Heart right ventricle (tissue), 16 donors: ENCODE measurements at regions of chr20 and their contacts with region 1.

Region 1: GRCh38 chr20:8131598-8132483 is at the start of gene PLCB1:
- DNase-seq: peak; percentile 86 to 88
- ATAC-seq: peak; percentile 89 to 97 (median 94)
- H3K4me3 ChIP-seq: peak within 1 kb of the TSS; percentile 60 to 95 (median 80)
- H3K27ac ChIP-seq: peak within 1 kb of the TSS; percentile 72 to 90 (median 86)
- H3K4me1 ChIP-seq: peaks cover 0 to 31% (median 9%) of the 10 kb centered on the region in 9 donors
- H3K27me3 ChIP-seq: peaks cover 0 to 19% (median 0%) of the 10 kb centered on the region in 7 donors
- CTCF ChIP-seq: peak; percentile 77 to 91 (median 87)
- total RNA-seq, gene PLCB1: 3.6 to 12.7 (median 7.5) TPM

Region 2: GRCh38 chr20:8043687-8044282 is 88.1 kb before region 1 on chr20:
- intact Hi-C with region 1: loop called in 6 of 10 experiments (anchors 5 to 10 kb)
- DNase-seq: peak in 1 of 2 donors; percentile 39
- ATAC-seq: peak in 6 of 8 donors; percentile 42 to 75 (median 64)
- H3K4me3 ChIP-seq: no peak overlapping the region
- H3K27ac ChIP-seq: no peak overlapping the region
- H3K4me1 ChIP-seq: peaks cover 0 to 6% (median 0%) of the 10 kb centered on the region in 9 donors
- H3K27me3 ChIP-seq: no peaks in the 10 kb centered on the region
- CTCF ChIP-seq: peak; percentile 63 to 85 (median 77)

Region 3: DNA sequence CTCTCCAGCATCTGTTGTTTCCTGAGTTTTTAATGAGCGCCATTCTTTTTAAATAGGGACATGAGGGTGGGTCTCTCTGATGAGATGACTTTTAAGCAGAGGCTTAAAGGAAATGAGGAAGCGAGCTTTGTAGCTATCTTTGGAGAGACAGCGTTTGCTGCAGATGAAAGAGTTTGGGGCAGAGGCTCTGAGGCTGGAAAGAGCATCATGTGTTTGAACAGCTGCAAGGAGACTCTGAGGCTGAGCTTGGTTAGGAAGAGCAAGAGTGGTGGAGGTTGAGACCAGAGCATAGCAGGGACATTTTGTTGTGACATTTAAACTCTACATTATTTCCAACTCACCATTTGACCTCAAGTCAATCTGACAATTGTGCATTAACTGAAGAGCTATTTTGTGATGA is 74.0 kb before region 1 on chr20:
- intact Hi-C with region 1: loop called in 1 of 10 experiments (anchors 10 kb)
- DNase-seq: no peak
- ATAC-seq: no peak
- H3K4me3 ChIP-seq: no peak overlapping the region
- H3K27ac ChIP-seq: no peak overlapping the region
- H3K4me1 ChIP-seq: no peaks in the 10 kb centered on the region
- H3K27me3 ChIP-seq: no peaks in the 10 kb centered on the region
- CTCF ChIP-seq: no peak

Region 4: GRCh38 chr20:8305449-8305978 is 173.7 kb after region 1 on chr20:
- intact Hi-C with region 1: loop called in 3 of 10 experiments (anchors 5 to 10 kb)
- DNase-seq: peak; percentile 9 to 12
- ATAC-seq: peak in 2 of 8 donors; percentile 23 to 29
- H3K4me3 ChIP-seq: no peak overlapping the region
- H3K27ac ChIP-seq: no peak overlapping the region
- H3K4me1 ChIP-seq: peaks cover 0 to 35% (median 4%) of the 10 kb centered on the region in 9 donors
- H3K27me3 ChIP-seq: no peaks in the 10 kb centered on the region
- CTCF ChIP-seq: peak in 8 of 9 donors; percentile 32 to 70 (median 57)

Region 5: GRCh38 chr20:8527998-8528723 is 396.3 kb after region 1 on chr20:
- intact Hi-C with region 1: loop called in 1 of 10 experiments (anchors 10 kb)
- DNase-seq: no peak
- ATAC-seq: no peak
- H3K4me3 ChIP-seq: no peak overlapping the region
- H3K27ac ChIP-seq: no peak overlapping the region
- H3K4me1 ChIP-seq: peaks cover 0 to 30% (median 0%) of the 10 kb centered on the region in 9 donors
- H3K27me3 ChIP-seq: no peaks in the 10 kb centered on the region
- CTCF ChIP-seq: no peak

Region 6: GRCh38 chr20:8664778-8665177 is 532.9 kb after region 1 on chr20:
- intact Hi-C with region 1: loop called in 1 of 10 experiments (anchors 5 kb)
- DNase-seq: peak in 1 of 2 donors; percentile 8
- ATAC-seq: peak in 6 of 8 donors; percentile 38 to 83 (median 79)
- H3K4me3 ChIP-seq: no peak overlapping the region
- H3K27ac ChIP-seq: peak overlapping the region in 2 of 10 donors; percentile 15 to 18
- H3K4me1 ChIP-seq: peaks cover 0 to 40% (median 15%) of the 10 kb centered on the region in 9 donors
- H3K27me3 ChIP-seq: no peaks in the 10 kb centered on the region
- CTCF ChIP-seq: peak in 8 of 9 donors; percentile 9 to 59 (median 32)